ENCODE measurements at regions of chr4 and their contacts with region 1.

Region 1: GRCh38 chr4:15001869-15002658 is at the start of gene CPEB2:
- DNase-seq: peak; percentile 84 to 97 (median 90)
- ATAC-seq: peak; percentile 65
- H3K4me3 ChIP-seq: peak within 1 kb of the TSS; percentile 88
- H3K4me3 Mint-ChIP-seq: peak within 1 kb of the TSS; percentile 99
- H3K27ac ChIP-seq: peak within 1 kb of the TSS; percentile 100
- H3K27ac Mint-ChIP-seq: peak within 1 kb of the TSS; percentile 99
- H3K4me1 ChIP-seq: no peaks in the 10 kb centered on the region
- H3K4me1 Mint-ChIP-seq: peaks cover 26% of the 10 kb centered on the region
- H3K27me3 ChIP-seq: no peaks in the 10 kb centered on the region
- H3K27me3 Mint-ChIP-seq: no peaks in the 10 kb centered on the region
- CTCF ChIP-seq: no peak
- total RNA-seq, gene CPEB2: 26.4 to 27.0 TPM

Region 2: DNA sequence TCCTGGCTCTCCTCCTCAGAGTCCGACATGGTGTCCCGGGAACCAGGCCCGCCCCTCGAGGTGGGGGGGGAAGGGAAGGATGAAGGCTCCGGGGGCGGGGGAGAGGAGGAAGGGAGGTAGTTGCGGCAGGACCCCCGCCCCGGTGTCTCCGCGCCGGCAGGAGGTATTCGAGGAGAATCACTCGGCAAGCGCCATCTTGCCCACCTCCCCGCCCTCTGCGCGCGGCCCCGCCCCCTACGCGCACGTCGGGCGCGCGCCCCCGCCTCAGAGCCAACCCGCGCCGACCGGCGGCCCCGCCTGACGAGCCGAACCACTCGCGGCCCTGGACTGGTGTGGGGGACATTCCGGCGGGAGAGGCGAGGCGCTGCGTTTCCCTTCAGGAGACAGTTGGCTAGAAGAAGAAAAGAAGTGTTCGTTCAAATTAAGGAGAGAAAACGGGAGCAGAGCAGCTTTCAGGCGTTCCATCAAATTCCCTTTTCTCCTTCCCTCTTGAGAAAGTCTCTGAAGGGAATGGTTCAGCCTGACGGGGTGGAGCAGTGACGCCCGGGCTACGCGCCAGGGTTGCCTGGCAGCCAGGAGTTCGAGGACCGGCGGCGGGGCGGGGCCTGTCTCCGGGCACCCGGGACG is 1517.8 kb before region 1 on chr4 and contains the start of gene RAB28:
- CTCF ChIA-PET with region 1: no interaction called
- POLR2A ChIA-PET with region 1: interaction called, 4 read pairs
- intact Hi-C with region 1: loop called (anchors 2 to 5 kb)
- DNase-seq: peak; percentile 87 to 97 (median 92)
- ATAC-seq: peak; percentile 86
- H3K4me3 ChIP-seq: peak within 1 kb of the TSS; percentile 75
- H3K4me3 Mint-ChIP-seq: peak within 1 kb of the TSS; percentile 91
- H3K27ac ChIP-seq: peak within 1 kb of the TSS; percentile 89 to 98
- H3K27ac Mint-ChIP-seq: peak within 1 kb of the TSS; percentile 94
- H3K4me1 ChIP-seq: peaks cover 22% of the 10 kb centered on the region
- H3K4me1 Mint-ChIP-seq: peaks cover 23% of the 10 kb centered on the region
- H3K27me3 ChIP-seq: peaks cover 0 to 10% of the 10 kb centered on the region in 2 experiments
- H3K27me3 Mint-ChIP-seq: peaks cover 14% of the 10 kb centered on the region
- CTCF ChIP-seq: no peak
- total RNA-seq, gene RAB28: 3.9 to 4.2 TPM

Region 3: GRCh38 chr4:13654158-13654797 is 1347.8 kb before region 1 on chr4:
- CTCF ChIA-PET with region 1: no interaction called
- POLR2A ChIA-PET with region 1: interaction called, 7 read pairs
- intact Hi-C with region 1: loop called (anchors 2 to 5 kb)
- DNase-seq: peak; percentile 55 to 84 (median 73)
- ATAC-seq: peak; percentile 93
- H3K4me3 ChIP-seq: peak overlapping the region; percentile 60
- H3K4me3 Mint-ChIP-seq: peak overlapping the region; percentile 94
- H3K27ac ChIP-seq: no peak overlapping the region
- H3K27ac Mint-ChIP-seq: no peak overlapping the region
- H3K4me1 ChIP-seq: peaks cover 6% of the 10 kb centered on the region
- H3K4me1 Mint-ChIP-seq: peaks cover 18% of the 10 kb centered on the region
- H3K27me3 ChIP-seq: no peaks in the 10 kb centered on the region
- H3K27me3 Mint-ChIP-seq: peaks cover 21% of the 10 kb centered on the region
- CTCF ChIP-seq: peak; percentile 84

Region 4: GRCh38 chr4:14924812-14925344 is 77.2 kb before region 1 on chr4:
- CTCF ChIA-PET with region 1: no interaction called
- POLR2A ChIA-PET with region 1: interaction called, 7 read pairs
- intact Hi-C with region 1: loop called in 1 of 2 experiments (anchors 2 kb)
- DNase-seq: peak in 2 of 14 experiments; percentile 9 to 24
- ATAC-seq: peak; percentile 10
- H3K4me3 ChIP-seq: no peak overlapping the region
- H3K4me3 Mint-ChIP-seq: no peak overlapping the region
- H3K27ac ChIP-seq: no peak overlapping the region
- H3K27ac Mint-ChIP-seq: no peak overlapping the region
- H3K4me1 ChIP-seq: no peaks in the 10 kb centered on the region
- H3K4me1 Mint-ChIP-seq: no peaks in the 10 kb centered on the region
- H3K27me3 ChIP-seq: no peaks in the 10 kb centered on the region
- H3K27me3 Mint-ChIP-seq: no peaks in the 10 kb centered on the region
- CTCF ChIP-seq: no peak

Region 5: GRCh38 chr4:15681207-15682015 is 679.3 kb after region 1 on chr4 and contains the start of gene FAM200B:
- CTCF ChIA-PET with region 1: no interaction called
- POLR2A ChIA-PET with region 1: interaction called, 9 read pairs
- intact Hi-C with region 1: loop called in 1 of 2 experiments (anchors 2 kb)
- DNase-seq: peak; percentile 92 to 98 (median 96)
- ATAC-seq: peak; percentile 96
- H3K4me3 ChIP-seq: peak within 1 kb of the TSS; percentile 84
- H3K4me3 Mint-ChIP-seq: peak within 1 kb of the TSS; percentile 94
- H3K27ac ChIP-seq: peak within 1 kb of the TSS; percentile 71 to 77
- H3K27ac Mint-ChIP-seq: peak within 1 kb of the TSS; percentile 93
- H3K4me1 ChIP-seq: peaks cover 6% of the 10 kb centered on the region
- H3K4me1 Mint-ChIP-seq: peaks cover 46% of the 10 kb centered on the region
- H3K27me3 ChIP-seq: no peaks in the 10 kb centered on the region
- H3K27me3 Mint-ChIP-seq: no peaks in the 10 kb centered on the region
- CTCF ChIP-seq: no peak
- total RNA-seq, gene FAM200B: 18.5 to 22.1 TPM

Region 6: DNA sequence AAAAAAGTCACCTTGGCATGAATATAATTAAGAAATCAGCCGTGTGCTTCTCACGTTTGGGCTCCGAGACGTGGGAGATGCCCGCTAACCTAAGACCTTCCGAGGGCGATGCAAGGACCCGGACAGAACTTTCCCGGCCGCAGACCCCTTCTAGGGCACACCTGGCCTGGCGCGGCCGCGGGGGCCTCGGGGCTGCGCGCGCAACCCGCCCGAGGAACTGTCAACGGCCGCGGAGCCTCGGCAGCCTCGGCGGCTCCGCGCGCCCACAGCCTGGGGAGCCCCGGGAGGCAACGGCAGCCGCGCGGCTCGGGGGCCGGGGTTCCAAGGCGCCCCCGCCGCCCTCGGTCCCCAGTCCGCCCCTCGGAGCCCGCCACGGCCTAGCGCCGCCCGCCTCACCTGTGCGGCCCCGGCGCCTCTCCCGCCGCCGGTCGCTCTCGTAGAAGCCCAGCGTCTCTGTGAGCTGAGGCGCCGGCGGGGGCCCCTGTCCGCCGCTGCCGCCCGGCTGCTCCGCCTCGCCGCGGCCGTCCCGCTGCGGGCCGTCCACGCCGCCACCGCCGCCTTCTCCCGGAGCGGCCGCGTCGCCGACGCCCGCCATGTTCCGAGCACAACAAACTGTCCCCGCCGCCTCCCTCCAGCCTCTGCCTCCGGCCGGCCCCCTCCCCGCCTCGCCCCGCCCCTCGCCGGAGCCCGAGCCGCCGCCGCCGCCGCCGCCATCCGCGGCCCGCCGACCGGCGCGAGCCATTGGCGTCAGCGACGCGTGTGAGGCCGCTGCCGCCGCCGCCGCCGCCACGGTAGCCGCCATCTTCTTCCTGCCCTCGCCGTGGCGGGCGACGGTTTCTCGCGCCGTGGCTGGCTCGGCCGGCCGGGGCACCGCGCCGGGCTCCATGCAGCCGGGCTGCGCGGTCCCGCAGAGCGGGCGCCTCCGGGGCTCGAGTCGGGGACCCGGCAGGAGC is 1224.1 kb after region 1 on chr4 and contains the start of gene TAPT1:
- CTCF ChIA-PET with region 1: no interaction called
- POLR2A ChIA-PET with region 1: no interaction called
- intact Hi-C with region 1: loop called in 1 of 2 experiments (anchors 5 kb)
- DNase-seq: peak; percentile 45 to 89 (median 71)
- ATAC-seq: peak; percentile 52
- H3K4me3 ChIP-seq: peak within 1 kb of the TSS; percentile 80
- H3K4me3 Mint-ChIP-seq: peak within 1 kb of the TSS; percentile 97
- H3K27ac ChIP-seq: peak within 1 kb of the TSS; percentile 71 to 73
- H3K27ac Mint-ChIP-seq: peak within 1 kb of the TSS; percentile 97
- H3K4me1 ChIP-seq: peaks cover 21% of the 10 kb centered on the region
- H3K4me1 Mint-ChIP-seq: peaks cover 65% of the 10 kb centered on the region
- H3K27me3 ChIP-seq: no peaks in the 10 kb centered on the region
- H3K27me3 Mint-ChIP-seq: no peaks in the 10 kb centered on the region
- CTCF ChIP-seq: no peak
- total RNA-seq, gene TAPT1: 70.6 to 77.1 TPM